Caki2 (cell line): ENCODE measurements at regions of chr20 and their contacts with region 1.

Region 1: GRCh38 chr20:49424536-49424935 is 57.9 kb downstream of the KCNB1 start:
- DNase-seq: no peak

Region 2: GRCh38 chr20:49479785-49480184 is 55.2 kb after region 1 on chr20:
- in situ Hi-C with region 1: loop called (anchors 10 kb)
- DNase-seq: no peak